IMR-90 (cell line): ENCODE measurements at regions of chr12 and their contacts with region 1.

Region 1: GRCh38 chr12:96399919-96400797 is at the start of gene CDK17:
- DNase-seq: peak; percentile 83
- ATAC-seq: peak; percentile 82
- H3K4me3 ChIP-seq: peak within 1 kb of the TSS; percentile 82
- H3K27ac ChIP-seq: peak within 1 kb of the TSS; percentile 95
- H3K4me1 ChIP-seq: peaks cover 2% of the 10 kb centered on the region; the same call in 1 of the 2 replicates
- H3K27me3 ChIP-seq: no peaks in the 10 kb centered on the region
- CTCF ChIP-seq: peak; percentile 59
- POLR2A ChIP-seq: peak; percentile 84
- RAD21 ChIP-seq: peak; percentile 38
- total RNA-seq, gene CDK17: 50.2 and 58.9 TPM in 2 replicates

Region 2: GRCh38 chr12:96035278-96036236 is 364.6 kb before region 1 on chr12 and contains the start of gene LTA4H:
- CTCF ChIA-PET with region 1: no interaction called
- POLR2A ChIA-PET with region 1: no interaction called
- dilution Hi-C with region 1: no loop called
- in situ Hi-C with region 1: no loop called
- intact Hi-C with region 1: loop called (anchors 1 kb)
- DNase-seq: peak; percentile 98
- ATAC-seq: peak; percentile 96
- H3K4me3 ChIP-seq: peak within 1 kb of the TSS; percentile 87
- H3K27ac ChIP-seq: peak within 1 kb of the TSS; percentile 54
- H3K4me1 ChIP-seq: 0 out of 2 replicates have a peak, but pooled peaks cover 2% of the 10 kb centered on the region
- H3K27me3 ChIP-seq: no peaks in the 10 kb centered on the region
- CTCF ChIP-seq: no peak
- POLR2A ChIP-seq: peak; percentile 66; the same call in 1 of the 2 replicates
- RAD21 ChIP-seq: no peak
- total RNA-seq, gene LTA4H: 41.0 and 76.7 TPM in 2 replicates

Region 3: DNA sequence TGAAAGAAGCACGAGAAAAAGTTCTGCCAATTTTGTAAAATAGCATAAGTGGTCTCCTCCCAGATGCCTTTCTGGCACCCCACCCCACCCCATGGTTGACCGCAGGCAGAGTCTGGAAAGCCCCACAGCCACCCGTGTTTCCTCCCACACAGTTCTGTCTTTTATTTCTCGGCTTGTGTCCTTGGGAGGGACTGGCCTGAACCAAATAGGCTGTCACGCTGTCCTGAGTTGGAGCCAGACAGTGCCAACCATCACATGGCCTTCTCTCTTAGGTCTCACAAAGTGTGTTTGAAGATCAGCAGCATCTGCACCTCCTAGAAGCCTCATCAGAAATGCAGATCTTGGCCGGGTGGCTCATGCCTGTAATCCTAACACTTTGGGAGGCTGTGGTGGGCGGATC is 354.6 kb before region 1 on chr12:
- CTCF ChIA-PET with region 1: no interaction called
- POLR2A ChIA-PET with region 1: no interaction called
- dilution Hi-C with region 1: no loop called
- in situ Hi-C with region 1: no loop called
- intact Hi-C with region 1: no loop called
- DNase-seq: no peak
- ATAC-seq: no peak
- H3K4me3 ChIP-seq: no peak overlapping the region
- H3K27ac ChIP-seq: no peak overlapping the region
- H3K4me1 ChIP-seq: peaks cover 7% of the 10 kb centered on the region
- H3K27me3 ChIP-seq: no peaks in the 10 kb centered on the region
- CTCF ChIP-seq: no peak
- POLR2A ChIP-seq: no peak
- RAD21 ChIP-seq: no peak

Region 4: GRCh38 chr12:96177013-96177412 is 223.1 kb before region 1 on chr12:
- CTCF ChIA-PET with region 1: no interaction called
- POLR2A ChIA-PET with region 1: no interaction called
- dilution Hi-C with region 1: no loop called
- in situ Hi-C with region 1: no loop called
- intact Hi-C with region 1: no loop called
- DNase-seq: peak; percentile 82
- ATAC-seq: no peak; the same call in 1 of the 2 replicates
- H3K4me3 ChIP-seq: no peak overlapping the region
- H3K27ac ChIP-seq: no peak overlapping the region
- H3K4me1 ChIP-seq: no peaks in the 10 kb centered on the region
- H3K27me3 ChIP-seq: peaks cover 2% of the 10 kb centered on the region; the same call in 1 of the 2 replicates
- CTCF ChIP-seq: no peak
- POLR2A ChIP-seq: no peak
- RAD21 ChIP-seq: no peak

Region 5: DNA sequence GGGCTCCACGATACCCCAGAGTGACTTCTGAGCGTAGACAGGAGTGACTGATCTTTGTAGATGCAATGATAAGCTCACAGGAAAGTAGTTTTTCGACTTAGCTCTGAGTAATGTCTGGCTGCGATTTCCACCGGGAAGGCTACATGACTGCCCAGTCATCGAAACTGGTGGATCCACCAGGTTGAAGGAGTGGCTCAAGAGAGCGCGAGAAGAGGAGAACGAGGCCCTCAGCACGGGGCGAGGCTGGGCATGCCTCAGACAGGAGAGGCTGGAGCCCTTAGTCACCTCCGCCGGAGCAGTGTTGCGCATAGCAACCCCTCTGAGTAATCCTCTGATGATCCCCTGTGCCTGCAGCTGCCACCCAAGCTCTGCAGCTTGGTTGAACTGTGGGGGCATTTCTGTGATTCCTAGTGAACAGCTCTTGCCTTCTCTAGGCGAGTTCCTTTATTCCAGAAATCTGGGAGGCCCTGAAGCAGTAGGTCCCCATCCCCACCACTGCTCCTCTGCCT is 180.4 kb before region 1 on chr12:
- CTCF ChIA-PET with region 1: interaction called, 3 read pairs
- POLR2A ChIA-PET with region 1: interaction called, 3 read pairs
- dilution Hi-C with region 1: no loop called
- in situ Hi-C with region 1: no loop called
- intact Hi-C with region 1: loop called (anchors 1 kb)
- DNase-seq: peak; percentile 98
- ATAC-seq: peak; percentile 96
- H3K4me3 ChIP-seq: no peak overlapping the region
- H3K27ac ChIP-seq: peak overlapping the region; percentile 83
- H3K4me1 ChIP-seq: peaks cover 14% of the 10 kb centered on the region
- H3K27me3 ChIP-seq: no peaks in the 10 kb centered on the region
- CTCF ChIP-seq: no peak
- POLR2A ChIP-seq: peak; percentile 60; the same call in 1 of the 2 replicates
- RAD21 ChIP-seq: peak; percentile 27

Region 6: GRCh38 chr12:96285158-96285557 is 115.0 kb before region 1 on chr12:
- CTCF ChIA-PET with region 1: no interaction called
- POLR2A ChIA-PET with region 1: interaction called, 19 read pairs
- dilution Hi-C with region 1: no loop called
- in situ Hi-C with region 1: no loop called
- intact Hi-C with region 1: no loop called
- DNase-seq: no peak
- ATAC-seq: no peak
- H3K4me3 ChIP-seq: no peak overlapping the region
- H3K27ac ChIP-seq: no peak overlapping the region
- H3K4me1 ChIP-seq: 0 out of 2 replicates have a peak, but pooled peaks cover 2% of the 10 kb centered on the region
- H3K27me3 ChIP-seq: no peaks in the 10 kb centered on the region
- CTCF ChIP-seq: no peak
- POLR2A ChIP-seq: no peak
- RAD21 ChIP-seq: no peak

Region 7: DNA sequence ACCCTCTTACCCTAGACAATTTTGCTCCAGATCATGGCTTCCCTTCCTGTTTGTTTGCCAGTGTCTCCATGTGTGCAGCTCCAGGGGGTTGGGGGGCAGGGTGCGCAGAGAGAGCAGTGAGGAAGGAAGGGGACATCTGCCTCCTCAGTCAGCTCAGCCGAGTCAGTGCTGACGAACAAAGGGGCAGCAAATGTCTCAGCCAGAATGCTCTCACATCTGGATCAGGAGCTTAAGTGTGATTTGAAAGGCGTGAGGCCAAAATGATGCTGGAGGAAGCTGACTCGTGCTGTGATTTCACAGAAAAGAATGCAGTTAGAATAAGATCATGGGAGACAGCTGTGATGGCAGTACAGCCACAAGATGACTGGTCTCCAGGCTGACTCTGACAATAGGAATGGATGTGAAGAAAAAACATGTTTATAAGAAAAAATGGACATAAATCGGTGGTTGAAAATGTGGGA is 27.1 kb after region 1 on chr12:
- CTCF ChIA-PET with region 1: interaction called, 4 read pairs
- POLR2A ChIA-PET with region 1: interaction called, 3 read pairs
- dilution Hi-C with region 1: no loop called
- in situ Hi-C with region 1: no loop called
- intact Hi-C with region 1: loop called (anchors 2 kb)
- DNase-seq: peak; percentile 100
- ATAC-seq: peak; percentile 88
- H3K4me3 ChIP-seq: peak overlapping the region; percentile 46
- H3K27ac ChIP-seq: peak overlapping the region; percentile 99
- H3K4me1 ChIP-seq: peaks cover 22% of the 10 kb centered on the region
- H3K27me3 ChIP-seq: no peaks in the 10 kb centered on the region
- CTCF ChIP-seq: no peak
- POLR2A ChIP-seq: peak; percentile 88
- RAD21 ChIP-seq: peak; percentile 39; the same call in 1 of the 2 replicates

Region 8: DNA sequence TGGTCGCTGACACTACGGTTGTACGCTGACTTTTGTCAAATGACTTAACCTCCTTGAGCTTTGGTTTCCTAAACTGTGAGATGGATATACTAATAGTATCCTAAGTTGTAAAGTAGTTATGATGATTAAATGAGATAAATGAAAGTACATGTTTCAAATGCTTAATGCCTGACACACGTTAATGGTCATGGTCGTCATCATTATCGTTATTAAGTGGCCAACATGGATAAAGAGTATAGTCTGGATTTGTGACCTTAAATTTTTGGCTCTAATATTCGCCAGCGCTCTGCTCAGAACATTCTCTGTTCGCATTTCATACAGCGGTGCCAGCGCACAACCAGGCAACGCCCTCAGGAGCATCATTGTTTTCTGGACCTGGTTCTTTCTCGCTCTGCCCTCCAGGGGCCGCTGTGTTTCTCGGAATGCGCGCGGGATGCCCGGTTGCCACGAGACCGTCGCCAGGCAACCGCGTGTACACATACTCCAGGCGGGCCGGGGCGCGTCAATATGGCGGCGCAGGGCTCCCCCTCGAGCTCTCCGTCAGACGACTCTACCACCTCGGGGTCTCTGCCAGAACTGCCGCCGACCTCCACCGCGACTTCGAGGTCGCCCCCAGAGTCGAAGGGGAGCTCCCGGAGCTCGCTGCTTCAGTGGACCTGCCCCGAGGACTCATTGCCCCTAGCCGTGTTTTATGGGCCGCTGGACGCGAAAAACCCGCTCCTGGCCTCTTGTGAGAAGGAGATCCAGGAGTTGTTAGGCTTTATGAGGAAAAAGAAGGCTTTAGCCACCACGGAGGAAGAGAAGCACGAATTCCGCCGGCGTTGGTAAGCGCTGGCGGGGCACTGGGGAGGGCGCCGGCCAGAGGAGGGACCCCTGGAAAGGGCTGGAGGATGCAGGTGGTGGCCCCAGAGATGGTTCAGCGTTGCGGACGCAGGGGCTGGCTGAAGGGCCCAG is 89.2 kb after region 1 on chr12 and contains the start of gene CFAP54:
- CTCF ChIA-PET with region 1: interaction called, 3 read pairs
- POLR2A ChIA-PET with region 1: interaction called, 3 read pairs
- dilution Hi-C with region 1: no loop called
- in situ Hi-C with region 1: loop called (anchors 5 kb)
- intact Hi-C with region 1: loop called (anchors 2 kb)
- DNase-seq: peak; percentile 89
- ATAC-seq: peak; percentile 89
- H3K4me3 ChIP-seq: peak within 1 kb of the TSS; percentile 88
- H3K27ac ChIP-seq: peak within 1 kb of the TSS; percentile 28
- H3K4me1 ChIP-seq: peaks cover 4% of the 10 kb centered on the region
- H3K27me3 ChIP-seq: no peaks in the 10 kb centered on the region
- CTCF ChIP-seq: peak; percentile 96
- POLR2A ChIP-seq: peak; percentile 77
- RAD21 ChIP-seq: peak; percentile 70
- total RNA-seq, gene CFAP54: 0.18 and 0.28 TPM in 2 replicates

Region 9: DNA sequence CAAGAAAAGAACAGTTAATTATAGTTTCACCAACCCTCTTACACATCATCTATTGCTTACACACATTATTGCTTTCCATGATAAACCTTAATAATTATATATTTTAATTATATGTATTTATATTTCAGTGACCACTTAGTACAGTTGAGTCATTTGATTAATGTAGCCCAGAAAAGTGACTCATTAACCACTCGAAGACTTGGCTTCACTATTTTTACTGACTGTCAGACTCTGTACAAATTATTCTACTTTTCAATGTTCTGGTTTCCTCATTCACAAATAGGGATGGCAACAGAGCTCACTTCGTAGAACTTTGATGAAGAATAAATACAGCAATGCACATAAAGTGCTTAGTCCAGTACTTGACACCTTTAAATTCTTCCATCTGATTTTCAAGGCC is 187.5 kb after region 1 on chr12:
- CTCF ChIA-PET with region 1: no interaction called
- POLR2A ChIA-PET with region 1: no interaction called
- dilution Hi-C with region 1: no loop called
- in situ Hi-C with region 1: no loop called
- intact Hi-C with region 1: no loop called
- DNase-seq: peak; percentile 22
- ATAC-seq: no peak
- H3K4me3 ChIP-seq: no peak overlapping the region
- H3K27ac ChIP-seq: no peak overlapping the region
- H3K4me1 ChIP-seq: no peaks in the 10 kb centered on the region
- H3K27me3 ChIP-seq: no peaks in the 10 kb centered on the region
- CTCF ChIP-seq: no peak
- POLR2A ChIP-seq: no peak
- RAD21 ChIP-seq: no peak